Thyroid gland (tissue), 4 donors: ENCODE measurements at regions of chr9 and their contacts with region 1.

Region 1: DNA sequence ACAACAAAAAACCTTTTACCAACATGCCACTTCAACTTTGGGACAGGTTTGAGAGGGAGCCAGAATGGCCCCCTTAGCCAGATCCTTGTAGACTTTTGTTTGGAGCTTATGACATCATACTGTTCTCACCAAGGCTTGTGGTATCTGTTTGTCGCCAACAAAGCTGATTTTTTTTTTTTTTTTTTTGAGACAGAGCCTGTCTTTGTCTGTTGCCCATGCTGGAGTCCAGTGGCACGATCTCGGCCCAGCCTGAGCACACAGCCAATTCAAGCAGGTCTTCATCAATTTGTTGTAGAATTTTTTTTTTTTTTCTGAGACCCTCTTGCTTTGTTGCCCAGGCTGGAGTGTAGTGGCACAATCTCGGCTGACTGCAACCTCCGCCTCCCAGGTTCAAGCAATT is 26.4 kb upstream of the NTNG2 start:
- DNase-seq: no peak
- H3K4me3 ChIP-seq: no peak overlapping the region
- H3K27ac ChIP-seq: no peak overlapping the region
- H3K4me1 ChIP-seq: no peaks in the 10 kb centered on the region
- H3K27me3 ChIP-seq: no peaks in the 10 kb centered on the region
- CTCF ChIP-seq: no peak
- POLR2A ChIP-seq: no peak

Region 2: DNA sequence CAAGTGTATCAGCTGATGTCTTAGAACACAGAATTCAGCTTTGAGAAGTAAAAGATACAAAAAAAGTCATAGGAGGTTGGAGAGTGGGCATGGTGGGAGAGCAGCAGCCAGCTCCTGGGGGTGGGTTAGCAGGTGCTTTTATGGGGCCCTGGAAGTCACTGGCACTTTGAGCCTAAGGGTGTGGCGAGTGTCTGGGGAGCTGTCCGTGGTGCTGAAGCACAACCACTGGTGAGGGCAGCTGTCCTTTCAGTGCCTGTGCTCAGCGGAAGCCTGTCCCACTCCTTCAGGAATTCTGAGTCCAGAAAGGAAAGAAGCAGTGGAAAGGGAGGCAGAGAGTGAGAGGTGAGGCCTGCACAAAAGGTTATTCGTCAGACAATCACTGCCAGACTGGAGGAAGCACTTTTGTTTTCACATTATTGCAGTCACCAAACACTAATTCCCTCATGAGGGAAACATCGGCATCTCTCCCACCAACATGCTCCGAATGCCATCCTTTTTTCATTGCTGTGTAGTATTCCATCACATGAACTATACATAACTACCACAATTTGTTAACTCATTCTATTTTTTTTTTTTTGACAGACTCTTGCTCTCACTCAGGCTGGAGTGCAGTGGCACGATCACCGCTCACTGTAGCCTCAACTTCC is 336.2 kb before region 1 on chr9:
- intact Hi-C with region 1: loop called (anchors 10 kb)
- DNase-seq: peak; percentile 38 to 66
- H3K4me3 ChIP-seq: no peak overlapping the region
- H3K27ac ChIP-seq: no peak overlapping the region
- H3K4me1 ChIP-seq: no peaks in the 10 kb centered on the region
- H3K27me3 ChIP-seq: no peaks in the 10 kb centered on the region
- CTCF ChIP-seq: no peak
- POLR2A ChIP-seq: no peak